ENCODE measurements at regions of chr2 and their contacts with region 1.

Region 1: DNA sequence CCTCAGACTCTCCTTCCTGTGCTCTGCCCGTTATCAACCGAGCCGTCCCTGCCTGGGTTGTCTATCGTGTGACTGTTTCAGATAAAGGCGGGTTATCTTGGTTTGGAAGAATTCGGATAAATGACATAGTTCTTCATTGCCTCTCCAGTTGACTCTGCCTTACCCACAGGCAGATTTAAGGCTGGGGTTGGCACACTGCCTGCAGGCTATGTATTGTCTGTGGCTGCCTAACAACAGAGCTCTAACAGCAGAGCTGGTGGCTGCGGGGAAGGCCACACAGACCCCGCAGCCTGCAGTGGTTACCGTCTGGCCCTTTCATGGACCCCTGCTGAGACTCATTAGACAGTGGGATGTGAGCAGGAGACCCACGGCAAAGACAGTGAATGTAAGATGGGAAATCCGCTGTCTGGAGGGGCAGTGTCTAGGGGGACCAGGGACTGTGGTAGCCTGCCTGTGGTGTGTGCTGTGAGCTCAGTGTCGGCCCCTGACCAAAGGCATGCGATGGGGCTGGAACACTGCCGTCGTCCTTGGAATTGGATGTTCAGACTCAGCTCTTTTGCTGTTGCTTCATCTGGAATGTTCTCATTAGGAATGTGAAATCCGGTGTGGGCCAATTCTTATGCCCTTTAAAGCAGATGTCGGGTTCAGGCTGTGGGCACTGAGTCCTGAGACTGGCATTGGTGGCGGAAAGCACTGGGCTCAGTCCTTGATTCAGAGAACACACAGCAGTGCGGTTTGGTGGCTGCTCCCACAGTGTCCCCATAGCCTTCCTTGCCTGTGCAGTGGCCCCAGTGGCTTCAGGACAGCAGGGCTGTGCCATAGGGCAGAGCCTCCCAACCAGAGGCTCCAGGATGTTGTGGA is 44.5 kb downstream of the SH3RF3 start:
- DNase-seq: peak in 4 of 5 donors; percentile 65 to 85 (median 74)
- ATAC-seq: peak; percentile 81 to 87 (median 86)
- H3K4me3 ChIP-seq: peak overlapping the region in 2 of 12 donors; percentile 7 to 10
- H3K27ac ChIP-seq: peak overlapping the region; percentile 66 to 94 (median 82)
- H3K4me1 ChIP-seq: peaks cover 2 to 65% (median 44%) of the 10 kb centered on the region in 12 donors
- H3K27me3 ChIP-seq: no peaks in the 10 kb centered on the region
- CTCF ChIP-seq: peak in 1 of 12 donors; percentile 11
- POLR2A ChIP-seq: no peak

Region 2: DNA sequence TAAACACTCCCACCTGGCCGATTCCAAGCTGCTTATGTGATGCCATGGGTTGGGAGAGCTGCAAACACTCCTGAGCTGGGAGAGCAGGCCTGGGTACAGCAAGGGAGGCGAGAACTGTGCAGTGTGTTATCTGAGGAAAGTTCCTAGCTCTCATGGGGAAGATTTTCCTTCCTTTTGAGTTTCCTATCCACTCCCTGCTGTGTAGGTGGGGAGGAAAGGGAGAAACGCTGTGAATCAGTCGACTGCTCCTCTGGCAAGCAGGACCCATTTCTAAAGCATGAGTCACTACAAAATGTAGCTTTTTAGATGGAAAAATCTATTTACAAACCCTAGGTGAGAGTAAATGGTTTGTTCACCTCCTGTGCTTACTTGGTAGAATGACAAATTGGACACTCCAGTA is 35.9 kb after region 1 on chr2:
- intact Hi-C with region 1: loop called in 1 of 10 experiments (anchors 1 kb)
- DNase-seq: no peak
- ATAC-seq: peak in 3 of 4 donors; percentile 62 to 74 (median 74)
- H3K4me3 ChIP-seq: no peak overlapping the region
- H3K27ac ChIP-seq: peak overlapping the region in 2 of 12 donors; percentile 19 to 31
- H3K4me1 ChIP-seq: peaks cover 0 to 60% (median 31%) of the 10 kb centered on the region in 12 donors
- H3K27me3 ChIP-seq: no peaks in the 10 kb centered on the region
- CTCF ChIP-seq: no peak
- POLR2A ChIP-seq: no peak

Region 3: GRCh38 chr2:109242654-109243331 is 69.3 kb after region 1 on chr2:
- intact Hi-C with region 1: loop called in 1 of 10 experiments (anchors 5 kb)
- DNase-seq: peak in 1 of 5 donors; percentile 50
- ATAC-seq: peak in 3 of 4 donors; percentile 52 to 83 (median 64)
- H3K4me3 ChIP-seq: no peak overlapping the region
- H3K27ac ChIP-seq: peak overlapping the region; percentile 40 to 92 (median 80)
- H3K4me1 ChIP-seq: peaks cover 17 to 80% (median 56%) of the 10 kb centered on the region in 12 donors
- H3K27me3 ChIP-seq: no peaks in the 10 kb centered on the region
- CTCF ChIP-seq: no peak
- POLR2A ChIP-seq: no peak